ENCODE measurements at regions of chr2 and their contacts with region 1.

Region 1: GRCh38 chr2:32168513-32168912 is 2.8 kb downstream of the SLC30A6 start:
- DNase-seq: no peak
- ATAC-seq: no peak
- H3K4me3 ChIP-seq: no peak overlapping the region
- H3K27ac ChIP-seq: no peak overlapping the region
- H3K4me1 ChIP-seq: peaks cover 22% of the 10 kb centered on the region
- H3K27me3 ChIP-seq: no peaks in the 10 kb centered on the region
- CTCF ChIP-seq: no peak
- EP300 ChIP-seq: no peak
- POLR2A ChIP-seq: no peak
- RAD21 ChIP-seq: no peak

Region 2: GRCh38 chr2:31937741-31938140 is 230.8 kb before region 1 on chr2:
- CTCF ChIA-PET with region 1: no interaction called
- POLR2A ChIA-PET with region 1: no interaction called
- in situ Hi-C with region 1: no loop called
- intact Hi-C with region 1: no loop called
- DNase-seq: no peak
- ATAC-seq: no peak
- H3K4me3 ChIP-seq: no peak overlapping the region
- H3K27ac ChIP-seq: no peak overlapping the region
- H3K4me1 ChIP-seq: no peaks in the 10 kb centered on the region
- H3K27me3 ChIP-seq: no peaks in the 10 kb centered on the region
- CTCF ChIP-seq: no peak
- EP300 ChIP-seq: no peak
- POLR2A ChIP-seq: no peak
- RAD21 ChIP-seq: no peak

Region 3: DNA sequence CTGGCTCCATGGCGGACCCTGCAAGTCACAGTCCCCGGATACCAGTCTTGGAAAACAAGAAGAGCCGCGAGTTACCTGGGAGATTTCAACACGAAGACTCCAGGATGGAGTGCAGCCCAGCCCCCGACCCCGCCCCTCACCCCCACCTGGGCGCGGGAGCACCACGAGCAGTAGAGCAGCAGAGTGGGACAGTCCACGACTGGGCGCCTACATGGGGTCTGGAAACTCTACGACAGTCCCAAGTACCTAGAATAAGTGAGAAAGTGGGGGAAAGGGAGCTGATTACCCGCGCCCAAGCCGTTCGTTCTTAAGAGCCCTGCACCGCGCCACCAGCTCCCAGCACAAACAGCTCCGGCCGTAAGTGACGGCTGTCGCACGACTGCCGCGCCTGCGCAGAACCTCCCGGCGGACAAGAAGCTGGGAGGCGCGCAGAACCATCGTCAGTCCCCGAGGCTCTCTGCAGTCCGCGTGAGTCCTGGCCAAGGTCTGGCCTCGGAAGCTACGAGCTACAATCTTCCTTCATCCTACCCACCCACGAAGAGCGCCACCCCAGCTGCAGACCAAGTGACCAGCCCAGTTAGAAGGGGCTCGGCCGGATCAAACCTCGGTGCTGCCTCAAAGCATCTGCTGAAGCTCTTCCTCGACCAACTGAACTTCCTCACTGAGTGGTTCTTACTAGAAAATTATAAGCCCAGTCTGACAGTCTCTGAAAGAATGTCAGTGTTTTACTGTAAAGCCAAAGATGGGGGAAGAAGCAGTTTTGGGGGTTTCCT is 128.9 kb before region 1 on chr2 and contains the start of gene DPY30:
- CTCF ChIA-PET with region 1: no interaction called
- POLR2A ChIA-PET with region 1: interaction called, 18 read pairs
- in situ Hi-C with region 1: no loop called
- intact Hi-C with region 1: no loop called
- DNase-seq: peak; percentile 91
- ATAC-seq: peak; percentile 95
- H3K4me3 ChIP-seq: peak within 1 kb of the TSS; percentile 72 to 96 (median 84)
- H3K27ac ChIP-seq: peak within 1 kb of the TSS; percentile 65
- H3K4me1 ChIP-seq: peaks cover 21% of the 10 kb centered on the region
- H3K27me3 ChIP-seq: no peaks in the 10 kb centered on the region; a peak in 1 of 5 replicates
- CTCF ChIP-seq: peak; percentile 60
- EP300 ChIP-seq: 0 out of 4 replicates have a peak, but pooled peaks of 1 of the 2 experiments have one; percentile 21
- POLR2A ChIP-seq: peak; percentile 98 to 100
- RAD21 ChIP-seq: peak; percentile 47
- total RNA-seq, gene DPY30: 118 and 165 TPM in 2 replicates

Region 4: GRCh38 chr2:32095671-32096070 is 72.8 kb before region 1 on chr2:
- CTCF ChIA-PET with region 1: no interaction called
- POLR2A ChIA-PET with region 1: no interaction called
- in situ Hi-C with region 1: no loop called
- intact Hi-C with region 1: no loop called
- DNase-seq: no peak
- ATAC-seq: no peak
- H3K4me3 ChIP-seq: no peak overlapping the region
- H3K27ac ChIP-seq: no peak overlapping the region
- H3K4me1 ChIP-seq: no peaks in the 10 kb centered on the region
- H3K27me3 ChIP-seq: no peaks in the 10 kb centered on the region
- CTCF ChIP-seq: no peak
- EP300 ChIP-seq: no peak
- POLR2A ChIP-seq: no peak
- RAD21 ChIP-seq: no peak

Region 5: DNA sequence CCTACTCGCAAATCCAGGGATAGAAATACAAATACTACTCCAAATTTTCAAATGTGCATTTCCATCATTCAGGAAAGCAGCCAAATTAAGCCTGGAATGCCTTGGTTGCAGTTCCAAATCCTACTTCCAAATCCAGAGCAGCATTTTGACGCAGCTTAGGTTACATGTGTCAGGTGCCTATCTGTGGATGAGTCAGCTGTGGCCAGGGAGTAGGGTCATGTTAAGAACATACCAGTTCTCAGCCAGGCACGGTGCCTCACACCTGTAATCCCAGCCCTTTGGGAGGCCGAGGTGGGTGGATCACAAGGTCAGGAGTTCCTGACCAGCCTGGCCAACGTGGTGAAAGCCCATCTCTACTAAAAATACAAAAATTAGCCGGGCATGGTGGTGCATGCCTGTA is 14.2 kb after region 1 on chr2:
- CTCF ChIA-PET with region 1: no interaction called
- POLR2A ChIA-PET with region 1: interaction called, 11 read pairs
- in situ Hi-C with region 1: no loop called
- intact Hi-C with region 1: no loop called
- DNase-seq: no peak
- ATAC-seq: no peak
- H3K4me3 ChIP-seq: no peak overlapping the region
- H3K27ac ChIP-seq: no peak overlapping the region
- H3K4me1 ChIP-seq: peaks cover 7% of the 10 kb centered on the region
- H3K27me3 ChIP-seq: no peaks in the 10 kb centered on the region
- CTCF ChIP-seq: no peak
- EP300 ChIP-seq: no peak
- POLR2A ChIP-seq: no peak
- RAD21 ChIP-seq: no peak

Region 6: DNA sequence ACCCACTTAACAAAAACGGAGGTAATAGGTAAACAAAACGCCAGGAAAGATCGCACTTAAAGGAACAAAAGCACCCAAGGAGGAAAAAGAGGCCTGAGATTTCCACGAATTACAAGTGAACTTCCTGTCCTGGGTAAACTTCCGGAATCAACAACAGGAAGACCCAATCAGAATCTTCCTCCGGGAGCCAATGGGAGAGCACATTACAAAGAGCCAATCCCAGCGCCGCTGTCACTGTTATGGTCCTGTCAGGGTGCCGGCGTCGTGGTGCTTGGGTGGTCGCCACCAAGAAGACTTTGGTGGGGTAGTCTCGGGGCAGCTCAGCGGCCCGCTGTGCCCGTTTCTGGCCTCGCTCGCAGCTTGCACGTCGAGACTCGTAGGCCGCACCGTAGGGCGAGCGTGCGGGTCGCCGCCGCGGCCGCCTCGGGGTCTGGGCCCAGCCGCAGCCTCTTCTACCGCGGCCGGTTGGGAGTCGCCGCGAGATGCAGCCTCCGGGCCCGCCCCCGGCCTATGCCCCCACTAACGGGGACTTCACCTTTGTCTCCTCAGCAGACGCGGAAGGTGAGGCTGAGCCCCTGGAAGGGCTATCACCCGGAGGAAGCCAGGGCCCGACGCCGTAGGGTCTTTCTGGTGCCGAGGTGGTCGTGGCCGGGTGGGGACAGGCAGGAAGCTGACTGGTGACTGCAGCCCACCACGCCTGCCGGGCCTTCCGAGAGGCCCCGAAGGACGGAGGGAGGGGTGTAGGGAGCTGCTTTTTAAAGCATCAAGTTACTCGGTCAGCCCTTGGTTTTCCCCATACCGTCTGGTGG is 109.4 kb after region 1 on chr2 and contains the start of gene YIPF4:
- CTCF ChIA-PET with region 1: no interaction called
- POLR2A ChIA-PET with region 1: interaction called, 11 read pairs
- in situ Hi-C with region 1: no loop called
- intact Hi-C with region 1: loop called (anchors 1 kb)
- DNase-seq: peak; percentile 96
- ATAC-seq: peak; percentile 98
- H3K4me3 ChIP-seq: peak within 1 kb of the TSS; percentile 91 to 98 (median 93)
- H3K27ac ChIP-seq: peak within 1 kb of the TSS; percentile 80
- H3K4me1 ChIP-seq: peaks cover 42% of the 10 kb centered on the region
- H3K27me3 ChIP-seq: no peaks in the 10 kb centered on the region; a peak in 1 of 5 replicates
- CTCF ChIP-seq: no peak
- EP300 ChIP-seq: no peak; a peak in 1 of 4 replicates
- POLR2A ChIP-seq: peak; percentile 77 to 86
- RAD21 ChIP-seq: peak; percentile 72
- total RNA-seq, gene YIPF4: 39.1 and 43.9 TPM in 2 replicates

Region 7: GRCh38 chr2:32330136-32330535 is 161.6 kb after region 1 on chr2:
- CTCF ChIA-PET with region 1: no interaction called
- POLR2A ChIA-PET with region 1: interaction called, 20 read pairs
- in situ Hi-C with region 1: no loop called
- intact Hi-C with region 1: loop called (anchors 2 kb)
- DNase-seq: no peak
- ATAC-seq: no peak
- H3K4me3 ChIP-seq: peak overlapping the region in 1 of 3 experiments; percentile 60; a peak in 2 of 6 replicates
- H3K27ac ChIP-seq: peak overlapping the region; percentile 93
- H3K4me1 ChIP-seq: peaks cover 49% of the 10 kb centered on the region
- H3K27me3 ChIP-seq: no peaks in the 10 kb centered on the region
- CTCF ChIP-seq: no peak
- EP300 ChIP-seq: no peak
- POLR2A ChIP-seq: no peak
- RAD21 ChIP-seq: no peak

Region 8: GRCh38 chr2:32342801-32343200 is 174.3 kb after region 1 on chr2:
- CTCF ChIA-PET with region 1: no interaction called
- POLR2A ChIA-PET with region 1: no interaction called
- in situ Hi-C with region 1: no loop called
- intact Hi-C with region 1: no loop called
- DNase-seq: no peak
- ATAC-seq: no peak
- H3K4me3 ChIP-seq: no peak overlapping the region
- H3K27ac ChIP-seq: no peak overlapping the region
- H3K4me1 ChIP-seq: no peaks in the 10 kb centered on the region
- H3K27me3 ChIP-seq: no peaks in the 10 kb centered on the region
- CTCF ChIP-seq: no peak
- EP300 ChIP-seq: no peak
- POLR2A ChIP-seq: no peak
- RAD21 ChIP-seq: no peak

Region 9: GRCh38 chr2:32399221-32399620 is 230.7 kb after region 1 on chr2:
- CTCF ChIA-PET with region 1: no interaction called
- POLR2A ChIA-PET with region 1: no interaction called
- in situ Hi-C with region 1: no loop called
- intact Hi-C with region 1: no loop called
- DNase-seq: no peak
- ATAC-seq: no peak
- H3K4me3 ChIP-seq: no peak overlapping the region
- H3K27ac ChIP-seq: no peak overlapping the region
- H3K4me1 ChIP-seq: no peaks in the 10 kb centered on the region
- H3K27me3 ChIP-seq: no peaks in the 10 kb centered on the region
- CTCF ChIP-seq: no peak
- EP300 ChIP-seq: no peak
- POLR2A ChIP-seq: no peak
- RAD21 ChIP-seq: no peak